HEK293T (cell line): ENCODE measurements at regions of chr1 and their contacts with region 1.

Region 1: GRCh38 chr1:91997607-91998195 is 32.1 kb upstream of the EPHX4 start:
- DNase-seq: peak; percentile 44

Region 2: GRCh38 chr1:91803847-91804545 is 193.7 kb before region 1 on chr1:
- CTCF ChIA-PET with region 1: no interaction called
- POLR2A ChIA-PET with region 1: no interaction called
- DNase-seq: no peak

Region 3: GRCh38 chr1:92080128-92080985 is 82.7 kb after region 1 on chr1 and contains the start of gene BTBD8:
- CTCF ChIA-PET with region 1: interaction called, 11 read pairs
- POLR2A ChIA-PET with region 1: no interaction called
- DNase-seq: peak; percentile 87

Region 4: DNA sequence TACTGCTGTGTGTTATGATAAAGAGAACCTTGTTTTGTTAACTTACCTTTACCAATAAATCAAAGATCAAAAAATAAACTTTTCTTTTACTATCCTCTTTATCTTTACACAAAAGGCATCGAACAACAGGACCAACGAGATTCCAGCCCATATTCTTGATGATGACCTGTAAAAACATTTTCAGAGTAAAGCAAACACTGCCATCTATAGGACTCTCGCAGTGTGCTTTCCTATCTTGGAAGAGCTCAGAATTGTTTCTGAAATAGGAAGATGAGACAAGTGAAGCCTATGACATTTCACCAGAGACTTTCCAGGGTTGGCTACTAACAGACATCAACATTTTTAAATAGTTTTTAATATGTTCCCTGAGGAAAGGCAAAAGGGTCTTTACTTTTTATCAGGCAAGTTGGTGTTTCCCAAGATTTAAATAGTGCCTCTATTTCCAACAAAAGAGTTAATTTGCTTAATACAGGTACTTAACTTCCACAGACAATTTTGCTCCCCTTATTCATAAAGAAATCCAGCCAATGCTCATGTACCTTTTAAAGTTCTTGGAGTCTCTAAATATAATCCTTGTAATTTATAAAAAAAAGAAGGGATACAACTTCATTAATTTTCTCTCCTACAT is 293.8 kb after region 1 on chr1:
- CTCF ChIA-PET with region 1: interaction called, 19 read pairs
- POLR2A ChIA-PET with region 1: no interaction called
- DNase-seq: peak; percentile 50